ENCODE measurements at regions of chr22 and their contacts with region 1.

Region 1: GRCh38 chr22:26779108-26779507 is 121.7 kb downstream of the MIAT start:
- DNase-seq: no peak
- H3K4me3 Mint-ChIP-seq: no peak overlapping the region
- H3K27ac Mint-ChIP-seq: no peak overlapping the region
- H3K4me1 Mint-ChIP-seq: no peaks in the 10 kb centered on the region
- H3K27me3 Mint-ChIP-seq: no peaks in the 10 kb centered on the region

Region 2: GRCh38 chr22:26756675-26757293 is 22.3 kb before region 1 on chr22:
- CTCF ChIA-PET with region 1: interaction called, 10 read pairs
- POLR2A ChIA-PET with region 1: no interaction called
- DNase-seq: peak; percentile 54
- H3K4me3 Mint-ChIP-seq: no peak overlapping the region
- H3K27ac Mint-ChIP-seq: no peak overlapping the region
- H3K4me1 Mint-ChIP-seq: peaks cover 1% of the 10 kb centered on the region
- H3K27me3 Mint-ChIP-seq: no peaks in the 10 kb centered on the region